AG04449 (cell line): ENCODE measurements at regions of chr9 and their contacts with region 1.

Region 1: GRCh38 chr9:5582835-5583195 is 46.1 kb upstream of the RIC1 start:
- DNase-seq: peak; percentile 26
- H3K4me3 ChIP-seq: no peak overlapping the region
- CTCF ChIP-seq: no peak

Region 2: DNA sequence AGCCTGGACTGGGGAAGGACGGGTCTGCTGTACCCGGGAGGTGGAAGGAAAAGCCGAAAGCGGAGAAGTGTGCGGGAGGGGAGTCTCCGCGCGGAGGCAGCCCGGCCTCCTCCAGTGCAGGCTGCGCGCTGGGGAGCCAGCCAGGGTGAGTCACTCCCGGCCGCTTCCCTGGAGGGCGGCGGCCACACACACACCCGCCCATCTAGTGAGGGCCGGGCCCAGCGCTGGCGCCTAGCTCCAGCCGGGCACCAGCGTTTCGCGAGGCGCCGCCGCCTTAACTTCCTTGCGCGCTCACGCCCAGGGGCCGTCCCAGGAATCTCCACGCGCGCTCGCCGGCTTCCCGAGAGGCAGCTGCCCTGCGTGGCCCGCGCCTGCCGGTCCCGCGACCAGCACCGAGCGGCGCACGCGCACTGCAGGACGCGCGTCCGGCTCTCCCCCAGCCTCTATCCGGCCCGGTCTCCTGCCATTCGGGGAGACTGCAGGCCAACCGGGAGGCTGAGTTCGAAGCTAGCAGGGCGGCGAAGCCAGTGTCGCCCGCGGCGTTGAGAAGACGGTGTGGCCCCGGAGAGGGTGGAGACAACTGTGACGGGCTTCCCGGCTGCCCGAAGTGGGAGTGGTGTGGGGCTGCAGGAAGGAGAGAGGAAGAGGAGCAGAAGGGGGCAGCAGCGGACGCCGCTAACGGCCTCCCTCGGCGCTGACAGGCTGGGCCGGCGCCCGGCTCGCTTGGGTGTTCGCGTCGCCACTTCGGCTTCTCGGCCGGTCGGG is 598.0 kb before region 1 on chr9 and contains the start of gene JAK2:
- CTCF ChIA-PET with region 1: interaction called, 21 read pairs
- POLR2A ChIA-PET with region 1: no interaction called
- DNase-seq: peak; percentile 54
- H3K4me3 ChIP-seq: peak within 1 kb of the TSS; percentile 80
- CTCF ChIP-seq: peak; percentile 78

Region 3: DNA sequence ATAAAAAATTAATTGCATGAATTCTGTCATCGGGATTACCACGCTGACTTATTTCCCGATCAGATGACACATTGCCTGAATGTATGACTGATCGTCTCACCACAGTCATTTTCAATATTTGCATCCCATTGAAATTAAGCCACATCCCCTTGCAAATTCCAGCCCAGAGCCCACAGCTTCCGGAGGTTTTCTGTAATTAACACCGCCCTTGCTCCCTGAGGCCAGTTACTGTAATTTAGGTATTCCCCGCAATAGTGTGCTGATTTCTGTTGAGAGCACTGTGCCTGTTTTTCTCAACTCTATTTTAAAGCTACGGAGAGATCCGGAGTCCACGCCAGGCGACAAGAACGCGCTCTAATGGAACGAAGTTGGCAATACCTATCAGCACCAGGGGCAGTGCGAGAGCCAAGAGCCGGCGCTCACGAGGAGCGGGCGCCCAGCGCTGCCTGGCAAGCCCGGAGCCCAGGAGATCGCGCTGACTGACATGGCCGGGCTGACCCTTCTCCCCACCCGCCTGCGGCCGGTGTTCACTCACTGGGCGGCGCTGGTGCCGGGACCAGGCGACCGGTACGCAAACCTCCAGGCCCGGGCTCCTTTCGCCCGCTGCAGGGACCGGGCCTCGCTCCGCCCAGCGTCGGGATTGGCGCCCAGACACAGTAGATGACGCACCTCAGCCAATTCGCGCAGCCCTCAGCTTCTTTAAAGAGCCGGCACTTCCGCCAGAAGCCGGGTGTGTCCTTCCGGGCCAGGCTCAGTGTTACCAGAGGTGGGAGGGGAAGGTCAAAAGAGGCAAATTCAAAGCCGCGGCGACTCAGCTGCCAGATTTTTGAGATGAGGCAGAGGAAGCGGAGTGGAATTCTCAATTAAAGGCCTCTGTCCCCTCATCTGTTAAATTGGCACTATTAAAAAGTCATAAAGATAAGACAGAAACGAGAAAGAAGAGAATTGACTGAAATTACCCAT is 145.3 kb before region 1 on chr9 and contains the start of gene PLGRKT:
- CTCF ChIA-PET with region 1: interaction called, 90 read pairs
- POLR2A ChIA-PET with region 1: interaction called, 3 read pairs
- DNase-seq: no peak
- H3K4me3 ChIP-seq: peak within 1 kb of the TSS; percentile 78
- CTCF ChIP-seq: no peak

Region 4: GRCh38 chr9:5557606-5558587 is 24.9 kb before region 1 on chr9:
- CTCF ChIA-PET with region 1: interaction called, 10 read pairs
- POLR2A ChIA-PET with region 1: no interaction called
- DNase-seq: no peak
- H3K4me3 ChIP-seq: no peak overlapping the region
- CTCF ChIP-seq: no peak

Region 5: GRCh38 chr9:5622019-5622418 is 39.2 kb after region 1 on chr9:
- CTCF ChIA-PET with region 1: interaction called, 20 read pairs
- POLR2A ChIA-PET with region 1: interaction called, 3 read pairs
- DNase-seq: peak; percentile 71
- H3K4me3 ChIP-seq: no peak overlapping the region
- CTCF ChIP-seq: no peak